SK-N-SH (cell line): ENCODE measurements at regions of chr5 and their contacts with region 1.

Region 1: GRCh38 chr5:170183816-170184687 is 48.7 kb upstream of the C5orf58 start:
- DNase-seq: peak; percentile 74
- H3K4me3 ChIP-seq: no peak overlapping the region
- H3K27ac ChIP-seq: peak overlapping the region in 1 of 2 experiments; percentile 85; a peak in 1 of 4 replicates
- H3K4me1 ChIP-seq: peaks cover 0 to 24% of the 10 kb centered on the region in 2 experiments; a peak in 2 of 4 replicates
- H3K27me3 ChIP-seq: no peaks in the 10 kb centered on the region
- CTCF ChIP-seq: peak; percentile 87
- EP300 ChIP-seq: no peak
- RAD21 ChIP-seq: peak; percentile 90

Region 2: GRCh38 chr5:170087168-170087817 is 96.8 kb before region 1 on chr5:
- CTCF ChIA-PET with region 1: interaction called, 34 read pairs
- POLR2A ChIA-PET with region 1: no interaction called
- DNase-seq: no peak
- H3K4me3 ChIP-seq: no peak overlapping the region
- H3K27ac ChIP-seq: no peak overlapping the region
- H3K4me1 ChIP-seq: no peaks in the 10 kb centered on the region
- H3K27me3 ChIP-seq: no peaks in the 10 kb centered on the region; the same call in 1 of the 2 replicates
- CTCF ChIP-seq: no peak
- EP300 ChIP-seq: no peak
- RAD21 ChIP-seq: no peak

Region 3: GRCh38 chr5:170166101-170166500 is 18.0 kb before region 1 on chr5:
- CTCF ChIA-PET with region 1: interaction called, 52 read pairs
- POLR2A ChIA-PET with region 1: no interaction called
- DNase-seq: no peak
- H3K4me3 ChIP-seq: no peak overlapping the region
- H3K27ac ChIP-seq: no peak overlapping the region
- H3K4me1 ChIP-seq: peaks cover 0 to 12% of the 10 kb centered on the region in 2 experiments; a peak in 1 of 4 replicates
- H3K27me3 ChIP-seq: no peaks in the 10 kb centered on the region
- CTCF ChIP-seq: no peak
- EP300 ChIP-seq: no peak
- RAD21 ChIP-seq: no peak

Region 4: GRCh38 chr5:170195961-170196360 is 11.9 kb after region 1 on chr5:
- CTCF ChIA-PET with region 1: interaction called, 81 read pairs
- POLR2A ChIA-PET with region 1: no interaction called
- DNase-seq: no peak
- H3K4me3 ChIP-seq: no peak overlapping the region
- H3K27ac ChIP-seq: no peak overlapping the region
- H3K4me1 ChIP-seq: peaks cover 0 to 11% of the 10 kb centered on the region in 2 experiments; a peak in 1 of 4 replicates
- H3K27me3 ChIP-seq: peaks cover 4% of the 10 kb centered on the region; the same call in 1 of the 2 replicates
- CTCF ChIP-seq: no peak
- EP300 ChIP-seq: no peak
- RAD21 ChIP-seq: no peak

Region 5: GRCh38 chr5:170404402-170404801 is 220.3 kb after region 1 on chr5:
- CTCF ChIA-PET with region 1: no interaction called
- POLR2A ChIA-PET with region 1: no interaction called
- DNase-seq: no peak
- H3K4me3 ChIP-seq: no peak overlapping the region
- H3K27ac ChIP-seq: no peak overlapping the region
- H3K4me1 ChIP-seq: peaks cover 0 to 11% of the 10 kb centered on the region in 2 experiments; a peak in 1 of 4 replicates
- H3K27me3 ChIP-seq: no peaks in the 10 kb centered on the region
- CTCF ChIP-seq: no peak
- EP300 ChIP-seq: no peak
- RAD21 ChIP-seq: no peak